BJ (cell line): ENCODE measurements at regions of chr14 and their contacts with region 1.

Region 1: DNA sequence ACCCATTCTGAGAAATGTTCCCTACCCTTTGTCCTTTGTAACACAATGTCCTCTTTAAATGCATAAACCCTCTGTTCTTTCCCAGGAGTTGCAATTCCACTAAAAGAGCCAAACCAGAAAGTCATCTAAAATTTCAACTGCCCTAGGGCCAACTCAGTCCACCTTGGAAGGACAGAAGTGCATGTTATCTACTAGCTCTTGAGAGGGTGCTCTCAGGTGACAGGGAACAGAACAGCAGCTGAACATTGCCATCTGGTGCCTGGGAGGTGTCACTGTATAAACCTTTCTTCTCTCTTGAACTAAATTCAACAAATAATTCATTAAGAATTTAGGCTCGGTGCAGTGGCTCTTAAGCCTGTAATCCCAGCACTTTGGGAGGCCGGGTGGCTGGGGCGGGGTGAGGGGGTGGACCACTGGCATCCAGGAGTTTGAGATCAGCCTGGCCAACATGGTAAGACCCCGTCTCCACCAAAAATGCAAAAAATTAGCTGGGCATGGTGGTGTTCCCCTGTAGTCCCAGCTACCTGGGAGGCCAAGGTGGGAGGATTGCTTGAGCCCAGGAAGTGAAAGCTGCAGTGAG is 10.3 kb upstream of the FERMT2 start:
- DNase-seq: no peak
- H3K4me3 ChIP-seq: no peak overlapping the region
- H3K27me3 ChIP-seq: no peaks in the 10 kb centered on the region
- CTCF ChIP-seq: peak; percentile 62

Region 2: DNA sequence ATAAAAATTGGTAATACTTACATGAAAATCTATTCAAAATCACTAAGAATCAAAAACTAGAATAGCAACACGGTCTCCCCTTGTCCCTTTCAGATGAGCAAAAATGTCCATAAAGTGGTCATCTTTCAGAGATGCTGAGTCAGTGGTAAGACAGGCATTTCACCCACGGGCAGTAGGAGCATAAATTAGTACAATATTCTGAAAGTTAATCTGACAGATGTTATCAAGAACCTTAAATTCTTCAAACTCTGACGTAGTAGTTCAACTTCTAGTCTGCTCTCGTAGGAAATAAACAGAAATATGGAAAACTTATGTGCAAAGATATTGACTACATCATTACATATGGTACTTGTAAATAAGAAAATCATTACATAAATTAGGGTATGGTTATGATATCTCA is 136.6 kb before region 1 on chr14:
- CTCF ChIA-PET with region 1: interaction called, 48 read pairs
- POLR2A ChIA-PET with region 1: no interaction called
- DNase-seq: no peak
- H3K4me3 ChIP-seq: no peak overlapping the region
- H3K27me3 ChIP-seq: no peaks in the 10 kb centered on the region
- CTCF ChIP-seq: no peak

Region 3: DNA sequence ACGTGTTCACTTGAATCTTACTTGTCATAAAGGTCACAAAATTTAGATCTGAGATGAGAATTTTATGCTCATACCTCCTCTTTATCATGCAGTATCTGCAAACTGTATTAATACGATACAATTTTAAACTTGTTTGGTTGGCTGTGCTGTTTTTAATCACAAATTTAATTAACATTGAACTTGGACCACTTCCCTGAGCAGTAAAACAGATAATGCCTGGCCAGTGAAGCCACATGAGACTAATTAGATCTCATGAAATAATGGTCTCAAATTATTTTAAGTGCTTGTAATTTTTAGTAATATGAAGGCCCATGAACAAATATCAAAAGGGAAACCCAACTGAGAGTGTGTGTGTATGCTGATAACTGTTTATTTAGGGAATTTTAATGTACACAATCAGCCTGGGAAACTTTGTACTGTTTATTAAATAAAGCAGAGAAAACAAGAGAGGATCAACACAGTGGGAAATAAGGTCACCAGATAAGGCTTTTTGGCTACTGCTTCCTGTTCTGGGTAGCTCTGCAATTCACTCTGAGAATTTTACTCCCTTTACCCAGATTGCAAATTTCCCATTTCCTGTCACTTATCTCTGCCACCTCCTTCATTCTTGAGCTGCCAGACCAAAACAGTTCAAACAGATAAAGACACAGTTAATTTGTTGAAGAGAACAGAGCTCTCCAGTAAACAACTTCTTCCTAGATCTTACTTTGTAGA is 108.2 kb before region 1 on chr14:
- CTCF ChIA-PET with region 1: no interaction called
- POLR2A ChIA-PET with region 1: no interaction called
- DNase-seq: no peak
- H3K4me3 ChIP-seq: no peak overlapping the region
- H3K27me3 ChIP-seq: no peaks in the 10 kb centered on the region
- CTCF ChIP-seq: no peak

Region 4: DNA sequence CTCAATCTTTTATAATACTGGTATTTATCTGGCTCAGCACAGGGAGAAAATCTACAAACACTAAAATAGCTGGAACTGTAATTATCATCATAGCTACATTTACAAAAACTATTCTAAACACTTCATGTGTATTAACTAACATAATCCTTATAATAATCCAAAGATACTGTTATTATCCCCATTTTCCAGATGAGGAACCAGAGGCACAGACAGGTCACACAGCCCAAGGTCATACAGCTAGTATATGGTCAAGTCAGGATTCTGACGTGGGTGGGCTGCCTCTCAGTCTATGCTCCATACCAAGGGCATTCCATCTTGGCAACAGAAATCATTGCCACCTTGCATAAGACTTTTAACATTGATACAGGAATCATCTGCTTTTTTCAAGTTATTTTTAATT is 21.7 kb before region 1 on chr14:
- CTCF ChIA-PET with region 1: no interaction called
- POLR2A ChIA-PET with region 1: no interaction called
- DNase-seq: no peak
- H3K4me3 ChIP-seq: no peak overlapping the region
- H3K27me3 ChIP-seq: no peaks in the 10 kb centered on the region
- CTCF ChIP-seq: no peak

Region 5: DNA sequence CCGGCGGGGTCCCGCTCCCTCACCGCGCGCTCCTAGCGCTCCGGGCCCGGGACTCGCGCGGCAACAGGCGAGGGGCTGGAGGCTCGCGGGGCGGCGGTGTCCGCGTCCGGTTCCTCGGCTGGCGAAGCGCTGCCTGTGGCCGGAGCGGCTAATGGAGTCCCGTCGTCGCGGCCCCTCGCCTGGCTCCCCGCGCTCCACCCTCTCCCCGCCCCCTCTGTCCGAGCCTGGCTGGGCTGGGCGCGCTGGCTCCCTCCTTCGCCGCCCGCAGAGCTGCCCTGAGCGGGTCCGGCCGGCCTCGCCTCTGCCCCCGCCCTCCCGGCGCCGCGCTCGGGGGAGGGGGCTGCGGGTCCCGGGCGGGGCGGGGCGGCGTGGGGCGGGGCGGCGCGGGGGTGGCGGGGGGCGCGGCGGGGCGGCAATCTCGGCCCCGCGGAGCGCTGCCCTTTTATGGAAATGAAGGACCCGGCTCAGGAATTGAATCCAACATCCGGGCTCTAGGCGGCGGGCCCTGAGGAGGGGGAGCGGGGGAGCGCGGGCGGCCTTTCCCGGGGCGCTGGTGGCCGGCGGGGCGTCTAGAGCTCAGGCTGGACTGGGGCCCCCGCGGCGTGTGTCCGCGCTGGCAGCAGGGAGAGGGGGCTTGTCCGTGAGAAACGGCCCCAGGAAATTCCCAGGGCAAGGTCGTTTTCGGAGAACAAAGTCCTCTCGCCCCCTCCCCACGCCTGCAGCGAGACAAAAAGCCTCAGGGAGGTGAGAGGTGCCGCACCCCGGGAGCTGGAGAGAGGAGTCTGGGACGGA is 10.1 kb before region 1 on chr14 and contains the start of gene FERMT2:
- CTCF ChIA-PET with region 1: interaction called, 14 read pairs
- POLR2A ChIA-PET with region 1: no interaction called
- DNase-seq: no peak
- H3K4me3 ChIP-seq: peak within 1 kb of the TSS; percentile 85
- H3K27me3 ChIP-seq: no peaks in the 10 kb centered on the region
- CTCF ChIP-seq: no peak
- polyA plus RNA-seq, gene FERMT2: 275 and 393 TPM in 2 replicates

Region 6: DNA sequence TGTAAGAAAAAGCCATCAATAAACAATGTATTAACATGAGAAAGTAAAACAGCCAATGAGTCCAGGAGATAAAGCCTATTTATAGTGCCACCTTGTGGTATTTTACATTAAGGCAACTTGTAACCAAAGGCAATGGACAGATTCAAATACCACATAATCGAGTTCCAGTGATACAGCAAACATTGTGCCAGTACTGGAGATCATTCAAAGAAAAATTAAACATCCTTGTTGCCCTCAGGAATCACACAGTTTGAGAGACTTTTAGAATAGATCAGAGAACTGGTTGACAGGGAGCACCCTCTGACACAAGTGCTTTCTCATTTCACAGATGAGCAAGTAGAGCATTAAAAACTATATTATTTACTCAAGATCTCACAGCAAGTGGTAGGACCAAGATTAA is 93.9 kb after region 1 on chr14:
- CTCF ChIA-PET with region 1: interaction called, 42 read pairs
- POLR2A ChIA-PET with region 1: no interaction called
- DNase-seq: no peak
- H3K4me3 ChIP-seq: no peak overlapping the region
- H3K27me3 ChIP-seq: no peaks in the 10 kb centered on the region
- CTCF ChIP-seq: peak; percentile 62